ENCODE measurements at regions of chr4 and their contacts with region 1.

Region 1: GRCh38 chr4:38034986-38035882 is 75.0 kb downstream of the PTTG2 start:
- DNase-seq: no peak
- ATAC-seq: peak; percentile 56

Region 2: GRCh38 chr4:37603070-37603468 is 432.2 kb before region 1 on chr4:
- intact Hi-C with region 1: loop called in 1 of 2 experiments (anchors 10 kb)
- DNase-seq: peak; percentile 71 to 83
- ATAC-seq: peak; percentile 74

Region 3: DNA sequence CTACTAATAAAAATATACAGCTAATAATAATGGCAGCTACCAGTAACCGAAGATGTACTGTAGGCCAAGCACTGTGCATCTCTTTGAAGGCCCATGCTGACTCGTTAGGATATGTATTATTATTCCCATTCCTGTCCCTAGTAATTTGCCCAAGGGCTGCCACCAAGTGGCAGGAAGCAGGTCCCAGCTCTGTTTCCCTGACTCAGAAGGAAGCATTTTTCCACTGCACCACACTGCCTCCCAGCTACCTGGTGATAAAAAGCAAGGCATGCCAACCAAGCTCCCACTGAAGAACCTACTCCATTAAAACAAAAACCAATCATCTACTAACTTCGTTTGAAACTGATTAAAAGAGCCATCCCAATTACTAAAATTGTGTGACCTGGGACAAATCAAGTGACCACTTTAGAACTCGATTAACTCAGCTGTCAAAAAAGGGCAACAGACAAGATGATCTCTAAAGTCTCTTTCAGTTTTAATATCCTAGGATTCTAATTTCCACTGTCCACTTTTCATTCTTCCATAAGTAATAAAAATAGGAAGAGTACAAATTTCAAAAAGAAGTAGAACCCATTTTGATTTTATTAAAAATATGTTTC is 233.1 kb before region 1 on chr4:
- intact Hi-C with region 1: loop called (anchors 5 to 10 kb)
- DNase-seq: peak; percentile 55 to 74
- ATAC-seq: peak; percentile 95

Region 4: DNA sequence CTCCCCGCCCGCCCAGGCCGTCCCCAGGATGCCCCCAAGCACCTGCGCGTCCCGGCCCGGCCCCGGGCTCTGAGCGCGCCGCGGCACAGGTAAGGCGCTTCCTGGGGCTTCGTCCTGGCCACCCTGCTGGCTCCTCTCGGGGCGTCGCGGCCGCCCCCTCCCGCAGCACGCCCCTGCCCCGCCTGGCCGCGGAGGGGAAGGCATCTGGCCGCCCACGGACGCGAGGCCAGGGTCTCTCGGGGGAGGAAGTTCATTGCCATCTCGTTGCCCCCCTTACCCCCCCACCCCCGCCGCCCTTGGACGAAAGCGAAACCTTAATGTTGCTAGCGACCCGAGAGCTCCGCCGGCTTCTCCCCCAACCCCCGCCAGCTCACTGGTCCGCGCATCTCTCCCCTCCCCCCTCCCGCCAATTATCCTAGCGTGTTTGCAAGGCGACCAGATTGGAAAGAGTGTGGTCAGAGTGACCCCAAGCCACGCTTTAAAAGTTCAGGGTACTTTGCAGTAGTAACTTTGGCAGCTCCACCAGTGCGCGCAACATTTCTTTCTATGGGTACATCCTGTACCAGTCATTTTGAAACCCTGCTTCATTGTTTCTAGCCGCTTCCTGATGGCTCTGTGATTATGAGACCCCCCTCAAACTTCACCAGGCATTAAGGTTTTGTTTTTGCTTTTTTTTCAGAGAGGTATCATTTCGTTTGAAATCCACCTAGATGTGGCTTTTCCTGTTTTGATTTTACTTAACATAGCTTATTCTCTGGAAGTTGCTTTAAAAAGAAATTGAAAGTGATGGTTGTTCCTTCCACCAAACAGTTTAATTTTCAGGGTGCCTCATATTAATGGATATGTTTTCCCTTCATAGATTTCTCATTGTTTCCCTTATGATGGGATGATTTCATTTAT is 143.7 kb before region 1 on chr4:
- intact Hi-C with region 1: loop called in 1 of 2 experiments (anchors 10 kb)
- DNase-seq: peak; percentile 40 to 59
- ATAC-seq: peak; percentile 60

Region 5: DNA sequence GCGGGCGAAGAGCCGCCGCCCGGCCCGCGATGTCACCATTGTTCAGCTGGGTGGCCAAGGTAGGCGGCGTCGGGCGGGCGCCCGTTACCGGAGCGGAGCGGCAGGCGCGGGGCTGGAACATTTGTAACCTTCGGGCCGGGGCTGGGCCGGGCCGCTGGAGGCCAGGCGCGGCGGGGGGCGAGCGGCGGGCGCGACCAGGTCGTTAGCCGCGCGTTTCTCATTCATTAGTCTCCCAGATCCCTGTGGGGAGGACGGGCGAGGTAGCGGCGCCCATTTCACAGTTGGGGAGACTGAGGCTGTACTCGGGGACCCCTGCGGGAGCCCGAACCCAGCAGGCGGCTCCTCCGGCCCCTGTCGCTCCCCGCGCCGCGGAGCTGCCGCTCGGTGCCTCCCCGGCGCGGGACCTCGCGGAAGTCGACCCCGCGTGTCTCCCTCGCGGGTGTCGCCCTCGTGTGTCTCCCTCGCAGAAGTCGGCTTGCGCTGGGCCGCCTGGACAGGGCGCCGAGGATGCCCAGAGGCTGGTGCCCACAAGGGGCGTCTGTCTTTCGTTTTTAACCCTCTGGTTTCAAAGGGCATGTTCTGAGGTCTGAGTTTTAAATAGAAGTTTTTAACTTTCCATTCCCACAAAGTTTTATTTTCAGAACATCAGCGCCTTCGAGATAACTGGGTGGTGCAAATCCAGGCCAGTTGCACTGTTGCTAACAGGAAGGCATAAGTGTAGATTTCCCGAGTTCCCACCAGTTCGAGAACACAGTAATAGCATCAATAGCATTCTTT is 57.6 kb before region 1 on chr4:
- intact Hi-C with region 1: loop called in 1 of 2 experiments (anchors 10 kb)
- DNase-seq: peak; percentile 78 to 85
- ATAC-seq: peak; percentile 75